CD4-positive, alpha-beta T cell (primary cell): ENCODE measurements at regions of chr2 and their contacts with region 1.

Region 1: DNA sequence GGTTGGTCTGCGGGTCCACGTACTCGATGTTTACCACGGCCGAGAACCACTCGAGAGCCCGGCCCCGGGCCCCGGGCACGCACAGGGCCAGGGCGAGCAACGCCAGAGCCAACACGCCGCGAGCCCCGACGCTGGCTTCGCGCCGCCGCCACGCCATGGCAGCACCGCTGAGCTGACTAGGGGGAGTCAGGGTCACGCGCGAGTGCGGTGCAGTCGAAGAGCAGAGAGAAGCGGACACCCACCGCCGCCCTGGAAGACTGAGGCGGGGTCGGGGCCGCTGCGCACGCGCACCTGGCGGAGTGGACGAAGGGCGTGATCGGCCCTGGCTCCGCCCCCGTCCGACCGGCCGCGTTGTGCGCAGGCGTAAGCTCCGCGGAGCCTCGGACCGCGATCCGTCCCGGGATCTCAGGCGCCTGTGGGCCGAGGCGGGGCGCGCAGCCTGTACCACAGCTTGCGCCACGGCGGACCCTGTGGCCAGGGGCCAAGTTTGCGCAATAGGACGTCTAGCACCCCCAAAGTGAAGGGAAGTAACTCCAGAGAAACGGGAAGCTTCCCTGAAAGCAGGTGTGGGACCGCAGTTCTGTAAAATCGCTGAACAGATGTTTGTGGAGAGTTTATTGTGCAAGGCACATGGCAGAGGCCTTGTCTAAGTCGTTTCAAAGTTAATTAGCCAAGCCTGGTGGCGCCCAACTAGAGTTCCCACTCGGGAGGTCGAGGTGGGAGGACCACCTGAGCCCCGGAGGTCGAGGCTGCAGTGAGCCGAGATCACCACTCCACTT is at the start of gene RNF149:
- DNase-seq: peak; percentile 82 to 95 (median 93)
- ATAC-seq: peak; percentile 56
- H3K4me3 ChIP-seq: peak within 1 kb of the TSS; percentile 90
- H3K4me3 Mint-ChIP-seq: peak within 1 kb of the TSS; percentile 98
- H3K27ac ChIP-seq: peak within 1 kb of the TSS; percentile 85 to 95
- H3K27ac Mint-ChIP-seq: peak within 1 kb of the TSS; percentile 96
- H3K4me1 ChIP-seq: peaks cover 67% of the 10 kb centered on the region
- H3K4me1 Mint-ChIP-seq: peaks cover 79% of the 10 kb centered on the region
- H3K27me3 ChIP-seq: no peaks in the 10 kb centered on the region
- H3K27me3 Mint-ChIP-seq: no peaks in the 10 kb centered on the region
- CTCF ChIP-seq: no peak
- total RNA-seq, gene RNF149: 139 to 150 TPM

Region 2: GRCh38 chr2:100957996-100958653 is 350.5 kb before region 1 on chr2:
- CTCF ChIA-PET with region 1: no interaction called
- POLR2A ChIA-PET with region 1: no interaction called
- intact Hi-C with region 1: no loop called
- DNase-seq: no peak
- ATAC-seq: no peak
- H3K4me3 ChIP-seq: no peak overlapping the region
- H3K4me3 Mint-ChIP-seq: no peak overlapping the region
- H3K27ac ChIP-seq: no peak overlapping the region
- H3K27ac Mint-ChIP-seq: no peak overlapping the region
- H3K4me1 ChIP-seq: no peaks in the 10 kb centered on the region
- H3K4me1 Mint-ChIP-seq: no peaks in the 10 kb centered on the region
- H3K27me3 ChIP-seq: no peaks in the 10 kb centered on the region
- H3K27me3 Mint-ChIP-seq: no peaks in the 10 kb centered on the region
- CTCF ChIP-seq: no peak

Region 3: DNA sequence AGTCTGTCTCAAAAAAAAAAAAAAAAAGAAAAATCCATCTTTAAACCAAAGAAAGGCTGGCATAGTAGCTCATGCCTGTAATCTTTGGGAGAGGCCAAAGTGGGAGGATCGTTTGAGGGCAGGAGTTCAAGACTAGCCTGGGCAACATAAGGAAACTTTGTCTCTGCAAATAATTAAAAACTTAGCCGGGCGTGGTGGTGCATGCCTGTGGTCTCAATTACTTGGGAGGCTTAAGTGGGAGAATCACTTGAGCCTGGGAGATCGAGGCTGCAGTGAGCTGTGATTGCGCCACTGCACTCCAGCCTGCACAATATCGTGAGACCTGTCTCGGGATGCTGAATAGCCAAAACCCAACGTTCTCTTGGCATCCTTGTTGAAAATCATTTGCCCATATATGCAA is 49.8 kb before region 1 on chr2:
- CTCF ChIA-PET with region 1: interaction called, 3 read pairs
- POLR2A ChIA-PET with region 1: interaction called, 17 read pairs
- intact Hi-C with region 1: loop called in 1 of 2 experiments (anchors 2 kb)
- DNase-seq: no peak
- ATAC-seq: no peak
- H3K4me3 ChIP-seq: no peak overlapping the region
- H3K4me3 Mint-ChIP-seq: peak overlapping the region; percentile 1
- H3K27ac ChIP-seq: no peak overlapping the region
- H3K27ac Mint-ChIP-seq: peak overlapping the region; percentile 65
- H3K4me1 ChIP-seq: peaks cover 34% of the 10 kb centered on the region
- H3K4me1 Mint-ChIP-seq: peaks cover 64% of the 10 kb centered on the region
- H3K27me3 ChIP-seq: no peaks in the 10 kb centered on the region
- H3K27me3 Mint-ChIP-seq: no peaks in the 10 kb centered on the region
- CTCF ChIP-seq: no peak